ENCODE measurements at regions of chr9 and their contacts with region 1.

Region 1: DNA sequence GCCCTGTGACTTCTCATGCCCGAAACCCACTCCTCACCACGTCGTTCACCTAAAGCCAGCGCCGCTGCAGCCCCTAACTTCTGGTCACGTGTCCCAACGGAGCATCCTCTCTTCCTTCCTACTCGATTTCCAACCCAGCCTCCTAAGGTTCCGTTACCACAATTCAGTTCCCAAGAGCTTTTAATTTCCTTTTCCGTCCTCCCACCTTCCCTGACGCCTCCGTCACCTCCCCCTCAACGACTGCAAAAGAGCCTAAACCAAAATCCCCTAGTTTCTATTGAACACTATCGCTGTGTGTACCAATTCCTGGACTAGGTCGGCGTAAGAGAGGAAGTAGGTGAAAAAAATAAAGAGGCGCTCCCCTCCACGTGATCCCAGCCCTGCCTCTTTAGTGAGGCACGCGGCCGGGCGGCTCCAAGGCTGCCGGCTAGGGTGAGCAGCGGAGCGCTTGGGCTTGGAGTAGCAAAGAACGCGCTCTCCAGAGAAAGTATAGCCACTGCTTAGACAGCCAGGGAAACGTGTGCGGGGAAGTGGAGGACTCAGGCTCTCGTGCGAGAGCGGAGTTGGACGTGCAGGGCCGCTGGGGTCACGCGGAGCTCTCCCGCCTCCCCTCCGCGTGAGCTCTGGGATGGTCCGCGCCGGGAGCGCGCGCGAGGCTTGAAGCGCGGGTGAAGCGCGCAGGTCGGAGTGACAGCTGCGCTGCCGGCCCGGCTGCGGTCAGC is at the starts of genes CENPP and NOL8:
- DNase-seq: peak; percentile 92
- ATAC-seq: peak; percentile 93
- H3K4me3 Mint-ChIP-seq: peak within 1 kb of the TSS; percentile 93
- H3K27ac Mint-ChIP-seq: peak within 1 kb of the TSS; percentile 91
- H3K4me1 Mint-ChIP-seq: peaks cover 48% of the 10 kb centered on the region
- H3K27me3 Mint-ChIP-seq: no peaks in the 10 kb centered on the region
- total RNA-seq, gene CENPP: 22.8 to 38.3 TPM
- total RNA-seq, gene NOL8: 59.7 to 64.1 TPM

Region 2: DNA sequence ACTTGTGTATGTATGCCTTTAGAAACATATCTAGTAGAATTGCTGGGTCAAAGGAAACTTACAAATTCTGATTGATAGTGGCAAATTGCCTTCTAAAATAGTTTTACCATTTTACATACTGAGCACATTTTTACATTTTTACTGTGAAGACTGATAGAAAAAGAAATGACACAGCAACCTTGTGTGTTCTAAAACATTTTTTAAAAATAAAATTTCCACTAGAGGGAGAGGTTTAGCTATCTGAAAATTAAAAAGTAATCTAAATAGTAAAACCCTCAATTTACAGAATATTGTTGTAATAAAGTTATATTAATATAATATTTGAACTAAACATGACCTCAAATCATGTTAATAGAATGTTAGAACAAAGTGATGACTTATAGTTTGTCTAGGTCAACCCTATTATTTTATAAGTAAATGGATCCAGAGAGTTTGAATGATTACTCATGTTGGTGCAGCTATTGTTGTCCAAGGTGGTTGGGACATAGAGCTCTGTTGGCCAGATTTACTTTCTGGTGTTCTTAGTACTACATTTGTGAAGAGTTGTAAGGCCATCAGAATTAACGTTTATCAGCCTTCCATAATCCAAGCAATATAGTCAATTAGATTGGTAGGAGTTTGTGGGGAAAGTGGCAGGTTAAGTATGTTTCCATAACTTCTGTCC is 17.5 kb after region 1 on chr9:
- CTCF ChIA-PET with region 1: no interaction called
- DNase-seq: no peak
- ATAC-seq: no peak
- H3K4me3 Mint-ChIP-seq: no peak overlapping the region
- H3K27ac Mint-ChIP-seq: no peak overlapping the region
- H3K4me1 Mint-ChIP-seq: no peaks in the 10 kb centered on the region
- H3K27me3 Mint-ChIP-seq: no peaks in the 10 kb centered on the region

Region 3: DNA sequence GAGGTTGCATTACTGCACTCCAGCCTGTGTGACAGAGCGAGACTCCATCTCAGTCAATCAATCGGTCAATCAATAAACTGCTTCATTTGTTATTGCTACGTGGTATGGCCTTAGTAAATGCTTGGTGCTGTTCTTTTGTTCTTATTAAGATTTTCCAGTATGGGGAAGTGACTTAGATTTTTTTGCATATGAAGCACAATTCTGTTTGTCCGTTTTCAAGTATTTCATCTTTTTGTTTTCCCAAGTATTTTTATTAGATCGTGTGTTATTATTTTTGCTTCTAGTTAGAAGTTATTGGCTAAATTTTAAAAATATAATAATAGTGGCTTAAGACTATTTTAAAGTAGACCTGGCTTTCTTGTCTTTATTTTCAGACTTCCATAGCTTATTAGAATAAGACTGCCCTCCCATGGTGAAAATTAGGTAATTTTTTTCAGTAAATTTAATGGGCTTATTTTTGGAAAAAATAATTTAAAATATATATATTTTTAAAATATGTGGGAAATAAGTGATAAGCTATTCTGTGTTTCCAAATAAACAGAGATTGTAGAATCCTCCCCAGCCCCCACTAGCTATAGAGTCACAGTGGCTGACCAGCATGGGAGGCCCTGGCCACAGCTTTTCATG is 113.6 kb after region 1 on chr9:
- CTCF ChIA-PET with region 1: interaction called, 11 read pairs
- DNase-seq: no peak
- ATAC-seq: no peak
- H3K4me3 Mint-ChIP-seq: no peak overlapping the region
- H3K27ac Mint-ChIP-seq: no peak overlapping the region
- H3K4me1 Mint-ChIP-seq: peaks cover 15% of the 10 kb centered on the region
- H3K27me3 Mint-ChIP-seq: no peaks in the 10 kb centered on the region

Region 4: DNA sequence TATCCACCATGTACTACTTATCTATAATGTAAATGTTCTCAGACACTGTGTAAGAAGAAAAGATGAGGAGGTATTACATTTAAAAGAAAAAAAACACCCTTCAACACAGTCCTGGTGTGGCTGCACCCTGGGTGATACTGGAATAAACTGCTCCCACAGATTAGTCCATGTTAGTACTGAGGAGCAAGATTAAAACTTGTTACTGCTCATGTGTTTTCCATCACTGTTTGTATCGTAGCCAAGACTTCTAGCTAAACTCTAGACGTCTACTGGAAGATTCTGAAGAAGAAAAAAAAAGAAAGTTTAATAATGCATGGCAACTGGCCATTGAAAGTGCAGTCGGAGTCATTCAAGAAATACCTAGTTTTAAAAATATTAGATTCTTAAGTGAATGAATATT is 156.9 kb after region 1 on chr9 and contains the start of gene ASPN:
- CTCF ChIA-PET with region 1: no interaction called
- DNase-seq: no peak
- ATAC-seq: no peak
- H3K4me3 Mint-ChIP-seq: no peak within 1 kb of the TSS
- H3K27ac Mint-ChIP-seq: no peak within 1 kb of the TSS
- H3K4me1 Mint-ChIP-seq: peaks cover 8% of the 10 kb centered on the region
- H3K27me3 Mint-ChIP-seq: no peaks in the 10 kb centered on the region
- total RNA-seq, gene ASPN: not detected